CD4-positive, alpha-beta memory T cell (primary cell): ENCODE measurements at regions of chr3 and their contacts with region 1.

Region 1: GRCh38 chr3:139099968-139100817 is 55.5 kb upstream of the PRR23C start:
- DNase-seq: no peak
- H3K4me3 ChIP-seq: no peak overlapping the region
- H3K4me3 Mint-ChIP-seq: no peak overlapping the region
- H3K27ac ChIP-seq: no peak overlapping the region
- H3K27ac Mint-ChIP-seq: no peak overlapping the region
- H3K4me1 ChIP-seq: no peaks in the 10 kb centered on the region
- H3K4me1 Mint-ChIP-seq: no peaks in the 10 kb centered on the region
- H3K27me3 ChIP-seq: no peaks in the 10 kb centered on the region
- H3K27me3 Mint-ChIP-seq: peaks cover 10 to 12% of the 10 kb centered on the region in 2 donors

Region 2: GRCh38 chr3:139062915-139063314 is 37.3 kb before region 1 on chr3:
- CTCF ChIA-PET with region 1: no interaction called
- POLR2A ChIA-PET with region 1: no interaction called
- intact Hi-C with region 1: no loop called
- DNase-seq: no peak
- H3K4me3 ChIP-seq: no peak overlapping the region
- H3K4me3 Mint-ChIP-seq: no peak overlapping the region
- H3K27ac ChIP-seq: no peak overlapping the region
- H3K27ac Mint-ChIP-seq: no peak overlapping the region
- H3K4me1 ChIP-seq: no peaks in the 10 kb centered on the region
- H3K4me1 Mint-ChIP-seq: no peaks in the 10 kb centered on the region
- H3K27me3 ChIP-seq: no peaks in the 10 kb centered on the region
- H3K27me3 Mint-ChIP-seq: no peaks in the 10 kb centered on the region

Region 3: GRCh38 chr3:139111392-139112229 is 11.4 kb after region 1 on chr3:
- CTCF ChIA-PET with region 1: interaction called, 11 read pairs
- POLR2A ChIA-PET with region 1: no interaction called
- intact Hi-C with region 1: no loop called
- DNase-seq: peak in 4 of 5 donors; percentile 30 to 39 (median 36)
- H3K4me3 ChIP-seq: no peak overlapping the region
- H3K4me3 Mint-ChIP-seq: peak overlapping the region in 1 of 8 donors; percentile 5
- H3K27ac ChIP-seq: no peak overlapping the region
- H3K27ac Mint-ChIP-seq: no peak overlapping the region
- H3K4me1 ChIP-seq: no peaks in the 10 kb centered on the region
- H3K4me1 Mint-ChIP-seq: peaks cover 5 to 19% (median 9%) of the 10 kb centered on the region in 4 donors
- H3K27me3 ChIP-seq: no peaks in the 10 kb centered on the region
- H3K27me3 Mint-ChIP-seq: peaks cover 2 to 18% of the 10 kb centered on the region in 2 donors